GM10248 (cell line): ENCODE measurements at regions of chr6 and their contacts with region 1.

Region 1: DNA sequence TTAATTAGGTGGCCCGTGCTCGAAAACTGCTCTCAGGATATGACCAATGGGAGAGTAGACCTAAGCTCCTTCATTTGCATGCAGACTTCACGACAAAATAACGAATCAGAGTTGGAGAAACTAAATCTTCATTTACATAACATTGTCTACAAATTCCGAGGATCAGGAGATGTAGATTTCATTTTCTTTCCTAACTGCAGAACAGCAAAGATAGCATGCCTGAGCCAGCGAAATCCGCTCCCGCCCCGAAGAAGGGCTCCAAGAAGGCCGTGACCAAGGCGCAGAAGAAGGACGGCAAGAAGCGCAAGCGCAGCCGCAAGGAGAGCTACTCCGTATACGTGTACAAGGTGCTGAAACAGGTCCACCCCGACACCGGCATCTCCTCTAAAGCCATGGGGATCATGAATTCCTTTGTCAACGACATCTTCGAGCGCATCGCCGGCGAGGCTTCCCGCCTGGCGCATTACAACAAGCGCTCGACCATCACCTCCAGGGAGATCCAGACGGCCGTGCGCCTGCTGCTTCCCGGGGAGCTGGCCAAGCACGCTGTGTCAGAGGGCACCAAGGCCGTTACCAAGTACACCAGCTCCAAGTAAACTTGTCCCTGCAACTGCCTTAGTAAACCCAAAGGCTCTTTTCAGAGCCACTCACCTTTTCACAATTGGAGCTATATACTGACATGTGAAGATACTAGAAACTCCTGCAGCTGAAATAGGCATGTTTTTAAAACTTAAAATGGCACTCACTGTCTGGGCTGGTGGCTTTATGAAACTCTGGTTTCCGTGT is 96.5 kb downstream of the HFE start:
- DNase-seq: peak; percentile 52
- CTCF ChIP-seq: no peak

Region 2: DNA sequence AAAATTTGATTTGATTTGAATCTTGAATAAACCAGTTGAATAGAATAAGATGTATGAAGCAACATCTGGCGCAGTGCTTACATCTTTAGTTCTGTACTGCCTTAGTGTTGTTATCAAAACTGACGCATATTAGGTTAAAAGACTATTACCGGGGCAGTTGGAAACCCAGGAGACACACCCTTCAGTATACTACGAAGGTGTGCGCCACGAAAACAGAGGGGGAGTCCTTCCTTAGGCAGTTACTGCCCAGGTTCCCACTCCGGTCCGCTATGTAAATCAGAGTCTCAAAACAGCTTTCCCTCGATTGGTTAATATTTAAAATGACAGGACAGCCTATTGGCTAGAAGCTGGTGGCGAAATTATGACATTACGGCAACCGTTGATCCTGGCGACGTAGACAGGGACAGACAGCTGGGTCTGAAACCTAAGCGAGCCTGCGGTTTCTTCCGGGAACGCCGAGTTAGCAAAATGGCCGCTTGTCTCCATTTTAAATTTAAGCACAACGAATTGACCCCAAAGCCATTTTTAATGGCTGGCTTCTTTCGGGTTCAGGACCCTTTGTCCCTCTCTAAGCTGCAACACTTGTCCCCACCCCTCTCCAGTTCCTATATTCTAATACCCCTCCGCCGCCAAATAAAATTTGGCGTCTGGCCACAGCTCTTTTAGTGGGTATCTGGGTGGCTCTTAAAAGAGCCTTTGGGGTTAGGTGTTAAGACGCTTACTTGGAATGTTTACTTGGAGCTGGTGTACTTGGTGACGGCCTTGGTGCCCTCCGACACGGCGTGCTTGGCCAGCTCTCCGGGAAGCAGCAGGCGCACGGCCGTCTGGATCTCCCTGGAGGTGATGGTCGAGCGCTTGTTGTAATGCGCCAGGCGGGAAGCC is 60.7 kb before region 1 on chr6:
- CTCF ChIA-PET with region 1: interaction called, 3 read pairs
- POLR2A ChIA-PET with region 1: interaction called, 19 read pairs
- DNase-seq: peak; percentile 83
- CTCF ChIP-seq: no peak

Region 3: GRCh38 chr6:26149240-26149639 is 34.5 kb before region 1 on chr6:
- CTCF ChIA-PET with region 1: no interaction called
- POLR2A ChIA-PET with region 1: no interaction called
- DNase-seq: no peak
- CTCF ChIP-seq: no peak

Region 4: GRCh38 chr6:26204332-26205165 is 20.8 kb after region 1 on chr6:
- CTCF ChIA-PET with region 1: interaction called, 6 read pairs
- POLR2A ChIA-PET with region 1: interaction called, 78 read pairs
- DNase-seq: peak; percentile 84
- CTCF ChIP-seq: peak; percentile 22

Region 5: DNA sequence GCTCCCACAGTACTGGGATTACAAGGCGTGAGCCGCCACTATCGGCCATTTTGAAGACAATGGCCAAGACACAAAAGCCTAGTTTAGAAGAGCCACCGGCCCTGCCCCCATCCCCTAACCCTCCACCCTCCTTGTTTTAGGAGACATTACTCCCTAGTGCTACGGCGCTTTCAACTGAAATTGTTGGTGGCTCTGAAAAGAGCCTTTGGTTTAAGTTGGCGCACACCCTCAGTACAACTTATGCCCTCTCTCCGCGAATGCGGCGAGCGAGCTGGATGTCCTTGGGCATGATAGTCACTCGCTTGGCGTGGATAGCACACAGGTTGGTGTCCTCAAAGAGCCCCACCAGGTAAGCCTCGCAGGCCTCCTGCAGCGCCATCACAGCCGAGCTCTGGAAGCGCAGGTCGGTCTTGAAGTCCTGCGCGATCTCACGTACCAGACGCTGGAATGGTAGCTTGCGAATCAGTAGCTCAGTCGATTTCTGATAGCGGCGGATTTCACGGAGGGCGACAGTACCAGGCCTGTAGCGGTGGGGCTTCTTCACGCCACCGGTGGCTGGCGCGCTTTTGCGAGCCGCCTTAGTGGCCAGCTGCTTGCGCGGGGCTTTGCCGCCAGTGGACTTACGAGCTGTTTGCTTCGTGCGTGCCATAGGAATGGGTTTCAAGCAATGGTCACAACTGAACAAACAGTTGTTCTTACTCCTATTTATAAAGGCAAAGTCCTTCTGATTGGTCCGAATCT is 66.4 kb after region 1 on chr6:
- CTCF ChIA-PET with region 1: interaction called, 5 read pairs
- POLR2A ChIA-PET with region 1: interaction called, 11 read pairs
- DNase-seq: no peak
- CTCF ChIP-seq: peak; percentile 59

Region 6: GRCh38 chr6:26342106-26343004 is 158.6 kb after region 1 on chr6:
- CTCF ChIA-PET with region 1: no interaction called
- POLR2A ChIA-PET with region 1: interaction called, 10 read pairs
- DNase-seq: no peak
- CTCF ChIP-seq: no peak